Cardiac septum (tissue), 1 donor: ENCODE measurements at regions of chr13 and their contacts with region 1.

Region 1: DNA sequence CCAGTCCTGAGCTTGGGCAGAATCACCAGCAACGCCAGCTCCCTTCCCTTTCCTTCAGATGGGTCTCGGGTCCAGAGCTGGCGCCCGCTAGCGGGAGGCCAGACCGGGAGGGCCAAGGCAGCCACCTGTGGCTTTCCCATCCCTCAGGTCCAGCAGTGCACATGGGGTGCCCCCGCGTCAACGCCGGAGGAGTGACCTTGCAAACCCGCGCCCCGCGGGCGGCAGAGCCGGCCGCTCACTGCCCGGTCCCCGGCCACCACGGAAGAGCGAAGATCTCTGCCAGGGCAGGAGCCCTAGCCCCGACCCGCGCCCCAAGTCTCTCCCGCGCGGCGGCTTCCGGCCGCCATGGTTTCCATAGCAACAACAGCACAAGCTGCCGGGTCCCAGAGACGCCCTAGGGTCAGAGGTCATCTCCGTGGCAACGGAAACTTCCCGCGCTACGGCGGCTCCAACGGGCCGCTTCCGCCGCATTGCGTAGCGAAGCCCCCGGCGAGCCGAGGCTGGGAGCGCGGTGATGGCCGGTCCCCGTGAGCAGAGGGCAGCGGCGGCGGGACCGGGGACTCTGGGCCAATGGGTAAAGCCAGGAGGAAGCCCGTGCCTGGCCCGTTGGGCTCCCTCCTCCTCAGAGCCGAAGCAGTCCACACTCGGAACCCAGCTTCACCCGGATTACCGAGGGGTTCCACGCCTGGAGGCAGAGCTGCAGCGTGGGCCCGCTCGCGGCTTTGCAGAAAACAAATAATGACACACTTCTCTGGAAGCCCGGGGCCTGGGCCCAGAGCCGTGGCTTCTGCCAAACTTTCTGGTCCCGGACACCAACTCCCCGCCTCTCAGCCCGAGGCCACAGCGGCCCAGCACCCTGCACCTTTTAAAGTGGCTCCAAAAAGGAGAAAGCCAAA is 7.4 kb downstream of the FGF14 start:
- DNase-seq: peak; percentile 95

Region 2: DNA sequence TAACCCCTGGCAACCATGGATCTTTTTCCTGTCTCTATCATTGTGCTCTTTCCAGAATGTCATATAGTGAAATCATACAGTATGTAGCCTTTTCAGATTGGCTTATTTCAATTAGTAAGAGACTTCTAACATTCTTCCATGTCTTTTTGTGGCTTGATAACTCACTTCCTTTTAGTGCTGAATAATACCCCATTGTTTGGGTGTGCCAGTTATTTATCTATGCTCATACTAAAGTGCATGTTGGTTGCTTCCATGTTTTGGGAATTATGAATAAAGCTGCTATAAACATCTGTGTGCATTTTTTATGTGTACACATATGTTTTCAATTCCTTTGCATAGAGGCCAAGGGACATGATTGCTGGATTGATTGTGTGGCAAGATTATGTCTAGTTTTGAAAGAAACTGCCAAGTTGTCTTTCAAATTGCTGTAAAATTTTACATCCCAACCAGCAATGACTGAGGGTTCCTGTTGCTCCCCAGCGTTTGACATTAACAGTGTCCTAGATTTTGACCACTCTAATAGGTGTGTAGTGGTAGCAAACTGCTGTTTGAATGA is 583.0 kb before region 1 on chr13:
- intact Hi-C with region 1: no loop called
- DNase-seq: no peak

Region 3: DNA sequence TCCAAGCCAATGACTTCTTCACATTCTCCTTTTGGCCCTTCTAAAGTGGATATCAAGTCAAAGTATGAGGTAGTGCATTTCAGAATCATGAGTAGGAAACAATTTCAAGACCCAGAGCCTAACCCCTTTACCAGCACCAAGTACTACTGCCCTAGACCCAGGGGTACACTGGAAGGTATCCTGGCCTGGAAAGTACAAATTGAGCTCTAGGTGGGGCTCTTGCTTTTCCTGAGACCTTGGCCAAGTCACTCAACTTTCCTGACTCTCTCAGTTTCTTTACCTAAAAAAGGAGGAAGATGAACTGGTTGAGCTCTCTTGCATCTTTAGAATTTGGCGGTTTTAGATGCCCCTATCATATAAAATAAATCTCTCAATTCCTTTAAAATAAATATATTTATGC is 197.2 kb before region 1 on chr13:
- intact Hi-C with region 1: loop called (anchors 10 kb)
- DNase-seq: no peak

Region 4: DNA sequence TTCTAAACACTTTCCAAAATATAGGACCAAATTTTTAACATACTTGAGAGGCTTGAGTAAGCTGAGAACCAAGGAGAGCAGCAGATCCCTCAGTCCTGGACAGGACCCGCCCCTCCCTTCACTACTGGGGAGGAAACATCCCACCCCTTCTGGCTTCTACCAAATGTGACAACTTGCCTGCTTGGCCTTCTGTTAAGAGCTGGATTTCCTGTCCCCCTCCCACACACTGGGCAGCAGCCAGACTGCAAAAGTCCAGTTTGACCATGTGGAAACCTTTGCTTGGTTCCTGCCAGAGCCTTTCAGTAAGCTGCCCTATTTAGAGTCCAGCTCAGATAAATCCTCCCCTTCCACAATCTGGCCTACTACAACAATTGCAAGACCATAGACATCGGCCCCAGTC is 76.8 kb before region 1 on chr13:
- intact Hi-C with region 1: loop called (anchors 5 kb)
- DNase-seq: peak; percentile 86

Region 5: DNA sequence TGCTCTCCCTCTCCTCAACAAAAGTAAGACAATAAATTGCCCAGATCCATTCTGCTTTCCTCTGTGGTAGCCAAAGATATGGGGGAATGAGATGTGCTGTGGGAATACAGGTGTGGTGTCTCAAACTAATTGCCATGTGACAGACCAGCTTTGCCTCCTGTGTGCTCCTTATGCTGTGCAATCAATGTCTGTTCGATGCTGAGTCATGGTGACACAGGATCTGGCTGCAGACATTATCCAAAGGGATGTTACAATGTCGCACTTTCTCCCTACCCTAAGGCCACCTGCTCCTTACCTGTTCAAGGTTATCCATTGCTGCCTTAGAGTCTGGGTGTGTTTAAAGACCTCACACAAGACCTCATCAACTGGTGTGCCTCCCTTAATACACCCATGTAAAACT is 25.1 kb before region 1 on chr13:
- intact Hi-C with region 1: no loop called
- DNase-seq: no peak